Natural killer cell (primary cell): ENCODE measurements at regions of chr2 and their contacts with region 1.

Region 1: DNA sequence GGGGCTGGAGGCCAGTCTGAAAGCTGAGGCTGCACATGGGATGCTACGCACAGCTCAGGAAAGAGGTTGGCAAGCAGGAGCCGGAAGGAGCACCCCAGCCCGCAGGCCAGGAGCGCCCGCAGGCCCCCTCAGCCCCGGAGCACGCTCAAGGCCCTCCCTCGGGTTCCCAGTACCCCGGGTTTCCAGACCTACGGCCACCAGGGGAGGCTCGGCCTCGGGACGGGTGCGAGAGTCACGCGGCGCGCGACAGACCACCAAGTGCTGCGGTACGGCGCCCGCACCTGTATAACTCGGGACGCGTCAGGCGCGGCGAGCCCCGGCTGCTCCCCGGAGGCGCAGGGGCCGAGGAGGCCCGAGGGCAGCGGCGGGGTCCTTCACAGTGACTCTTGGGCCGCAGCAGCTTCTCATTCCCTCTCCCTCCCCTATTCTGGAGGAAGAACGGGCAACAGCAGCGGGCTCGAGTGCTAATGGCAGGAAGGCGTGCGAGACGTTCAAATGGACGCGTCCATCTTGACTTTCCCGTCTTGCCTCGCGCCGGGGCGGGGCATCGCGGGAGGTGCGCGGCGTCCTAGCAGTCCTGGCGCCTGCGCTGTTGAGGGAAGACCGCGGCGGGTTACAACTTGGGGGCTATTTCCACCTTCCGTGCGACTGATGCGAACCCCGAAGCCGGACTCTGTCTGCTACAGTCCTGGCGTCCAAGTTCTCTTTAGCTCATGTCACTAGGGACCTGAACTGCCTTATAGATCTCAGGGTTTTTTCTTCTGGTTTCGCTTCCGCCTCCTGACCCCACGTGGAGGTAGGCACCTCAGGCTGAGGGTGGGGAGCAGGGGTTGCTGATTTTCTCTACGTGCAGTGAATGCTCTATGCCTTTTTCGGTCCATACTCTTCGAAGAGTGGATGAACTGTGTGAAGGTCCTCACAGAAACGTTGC is at the start of gene ANAPC1:
- DNase-seq: peak; percentile 78 to 91
- ATAC-seq: peak; percentile 96 to 98 (median 97)
- H3K4me3 ChIP-seq: peak within 1 kb of the TSS; percentile 98
- H3K4me3 Mint-ChIP-seq: peak within 1 kb of the TSS; percentile 95
- H3K27ac ChIP-seq: peak within 1 kb of the TSS; percentile 87
- H3K27ac Mint-ChIP-seq: peak within 1 kb of the TSS; percentile 91 to 94
- H3K4me1 ChIP-seq: peaks cover 12% of the 10 kb centered on the region
- H3K4me1 Mint-ChIP-seq: peaks cover 7 to 10% of the 10 kb centered on the region in 2 donors
- H3K27me3 ChIP-seq: no peaks in the 10 kb centered on the region
- H3K27me3 Mint-ChIP-seq: no peaks in the 10 kb centered on the region
- CTCF ChIP-seq: no peak
- total RNA-seq, gene ANAPC1: 38.7 to 50.8 (median 50.4) TPM

Region 2: GRCh38 chr2:111919794-111920608 is 36.1 kb after region 1 on chr2:
- intact Hi-C with region 1: no loop called
- DNase-seq: no peak
- ATAC-seq: no peak
- H3K4me3 ChIP-seq: no peak overlapping the region
- H3K4me3 Mint-ChIP-seq: no peak overlapping the region
- H3K27ac ChIP-seq: no peak overlapping the region
- H3K27ac Mint-ChIP-seq: no peak overlapping the region
- H3K4me1 ChIP-seq: no peaks in the 10 kb centered on the region
- H3K4me1 Mint-ChIP-seq: no peaks in the 10 kb centered on the region
- H3K27me3 ChIP-seq: no peaks in the 10 kb centered on the region
- H3K27me3 Mint-ChIP-seq: peaks cover 0 to 6% of the 10 kb centered on the region in 2 donors
- CTCF ChIP-seq: no peak

Region 3: GRCh38 chr2:112048887-112049286 is 165.0 kb after region 1 on chr2:
- intact Hi-C with region 1: loop called (anchors 1 kb)
- DNase-seq: peak in 1 of 2 donors; percentile 75
- ATAC-seq: peak; percentile 67 to 89 (median 76)
- H3K4me3 ChIP-seq: no peak overlapping the region
- H3K4me3 Mint-ChIP-seq: no peak overlapping the region
- H3K27ac ChIP-seq: no peak overlapping the region
- H3K27ac Mint-ChIP-seq: no peak overlapping the region
- H3K4me1 ChIP-seq: peaks cover 3% of the 10 kb centered on the region
- H3K4me1 Mint-ChIP-seq: peaks cover 7 to 14% of the 10 kb centered on the region in 2 donors
- H3K27me3 ChIP-seq: no peaks in the 10 kb centered on the region
- H3K27me3 Mint-ChIP-seq: peaks cover 3 to 9% of the 10 kb centered on the region in 2 donors
- CTCF ChIP-seq: peak; percentile 82

Region 4: DNA sequence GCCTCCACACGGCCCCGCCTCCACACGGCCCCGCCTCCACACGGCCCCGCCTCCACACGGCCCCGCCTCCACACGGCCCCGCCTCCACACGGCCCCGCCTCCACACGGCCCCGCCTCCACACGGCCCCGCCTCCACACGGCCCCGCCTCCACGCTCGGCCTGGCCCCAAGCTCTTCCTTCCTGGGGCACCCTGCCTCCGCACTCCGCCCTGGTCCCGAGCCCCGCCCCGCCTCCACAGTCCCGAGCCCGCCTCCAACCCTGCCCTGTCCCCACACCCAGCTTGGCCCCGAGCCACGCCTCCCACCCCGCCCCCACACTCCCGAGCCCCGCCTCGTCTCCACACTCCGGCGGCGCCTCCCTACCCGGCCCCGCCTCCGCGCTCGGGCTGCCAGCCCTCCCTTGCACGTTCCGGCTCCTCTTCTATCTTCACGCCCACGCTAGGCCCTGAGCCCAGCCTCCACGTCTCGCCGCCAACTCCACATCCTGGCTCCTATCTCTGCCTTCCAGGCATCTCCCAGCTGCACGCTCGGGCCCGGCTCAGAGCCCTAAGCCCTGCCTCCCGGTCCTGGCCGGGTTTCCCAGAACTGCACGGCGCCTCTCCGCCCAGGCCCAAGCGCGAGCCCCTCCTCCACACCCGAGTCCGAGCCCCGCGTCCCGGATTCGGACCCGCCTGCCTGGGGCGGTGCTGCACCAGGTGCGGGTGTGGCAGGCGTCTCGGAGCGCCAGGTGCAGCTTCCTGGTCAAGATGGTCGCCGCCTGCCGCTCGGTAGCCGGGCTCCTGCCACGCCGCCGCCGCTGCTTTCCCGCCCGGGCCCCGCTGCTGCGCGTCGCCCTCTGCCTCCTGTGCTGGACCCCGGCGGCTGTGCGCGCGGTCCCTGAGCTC is 171.2 kb after region 1 on chr2 and contains the start of gene TMEM87B:
- intact Hi-C with region 1: loop called (anchors 2 kb)
- DNase-seq: peak; percentile 88 to 98
- ATAC-seq: peak; percentile 65 to 86 (median 69)
- H3K4me3 ChIP-seq: peak within 1 kb of the TSS; percentile 74
- H3K4me3 Mint-ChIP-seq: peak within 1 kb of the TSS; percentile 97
- H3K27ac ChIP-seq: peak within 1 kb of the TSS; percentile 91
- H3K27ac Mint-ChIP-seq: peak within 1 kb of the TSS; percentile 92
- H3K4me1 ChIP-seq: peaks cover 15% of the 10 kb centered on the region
- H3K4me1 Mint-ChIP-seq: peaks cover 43 to 48% of the 10 kb centered on the region in 2 donors
- H3K27me3 ChIP-seq: no peaks in the 10 kb centered on the region
- H3K27me3 Mint-ChIP-seq: no peaks in the 10 kb centered on the region
- CTCF ChIP-seq: no peak
- total RNA-seq, gene TMEM87B: 9.6 to 15.7 (median 13.6) TPM